Astrocyte of the cerebellum (primary cell): ENCODE measurements at regions of chr6 and their contacts with region 1.

Region 1: DNA sequence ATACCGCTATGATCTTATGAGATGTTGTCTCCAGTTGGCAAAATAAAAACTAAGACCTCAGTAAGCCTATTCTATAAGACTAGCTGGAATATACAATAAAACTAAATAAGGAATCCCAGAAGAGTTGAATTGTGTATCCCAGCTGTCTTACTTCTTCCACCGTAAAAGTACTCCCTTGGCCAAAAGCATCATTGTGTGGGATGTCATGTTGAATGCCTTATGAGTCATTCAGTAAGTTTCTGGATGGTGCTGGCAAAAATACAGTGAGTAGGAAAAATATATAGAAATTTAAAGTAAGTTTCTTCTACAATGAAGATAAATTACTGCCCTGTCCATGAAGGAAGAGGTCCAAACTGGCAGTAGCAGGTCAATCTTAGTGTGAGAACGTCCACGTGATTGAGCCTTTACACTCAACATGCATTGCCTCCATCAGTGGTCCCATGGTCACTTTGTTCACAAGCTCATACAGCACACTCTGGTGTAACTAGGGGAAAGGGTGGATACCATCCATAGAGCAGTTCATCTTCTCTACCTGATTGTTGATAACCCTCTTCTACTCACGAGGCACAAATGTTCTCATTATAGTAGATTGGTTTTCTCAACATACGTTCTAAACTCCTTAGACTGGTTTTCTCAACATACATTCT is 13.7 kb upstream of the ZNF318 start:
- DNase-seq: peak; percentile 19
- H3K4me3 ChIP-seq: no peak overlapping the region
- CTCF ChIP-seq: no peak

Region 2: GRCh38 chr6:43310624-43311023 is 72.5 kb before region 1 on chr6:
- in situ Hi-C with region 1: loop called (anchors 5 kb)
- DNase-seq: no peak
- H3K4me3 ChIP-seq: no peak overlapping the region
- CTCF ChIP-seq: no peak

Region 3: DNA sequence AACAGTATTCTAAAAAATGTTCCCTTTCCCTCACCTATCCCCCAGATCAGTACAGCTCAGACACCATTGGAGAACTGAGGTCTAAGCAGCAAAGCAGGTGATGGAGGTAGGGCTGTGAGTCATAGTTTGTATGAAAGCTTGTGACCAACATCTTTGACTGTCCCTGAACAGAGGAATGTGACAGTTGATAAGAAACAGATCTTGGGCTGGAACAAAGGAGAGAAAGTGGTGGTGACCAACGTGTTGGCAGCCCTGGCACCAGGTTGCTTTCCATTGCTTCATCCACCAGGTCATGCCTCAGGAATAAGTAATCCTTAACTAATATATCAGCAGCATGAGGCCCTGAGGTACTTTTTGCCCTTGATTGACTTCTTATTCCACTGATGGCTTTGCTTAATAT is 54.6 kb before region 1 on chr6:
- in situ Hi-C with region 1: no loop called
- DNase-seq: no peak
- H3K4me3 ChIP-seq: no peak overlapping the region
- CTCF ChIP-seq: no peak

Region 4: GRCh38 chr6:43635387-43636307 is 252.5 kb after region 1 on chr6 and contains the start of gene MAD2L1BP:
- in situ Hi-C with region 1: no loop called
- DNase-seq: no peak
- H3K4me3 ChIP-seq: peak within 1 kb of the TSS; percentile 79
- CTCF ChIP-seq: no peak